Activated CD8-positive, alpha-beta T cell treated with anti-CD3 and anti-CD28 coated beads for 36 hours (primary cell): ENCODE measurements at regions of chr11 and their contacts with region 1.

Region 1: GRCh38 chr11:124070915-124071635 is 29.9 kb upstream of the OR10G7 start:
- DNase-seq: peak; percentile 72
- ATAC-seq: peak; percentile 64
- H3K4me3 Mint-ChIP-seq: peak overlapping the region; percentile 36
- H3K27ac Mint-ChIP-seq: peak overlapping the region; percentile 48
- H3K4me1 Mint-ChIP-seq: peaks cover 23% of the 10 kb centered on the region
- H3K27me3 Mint-ChIP-seq: peaks cover 24% of the 10 kb centered on the region
- CTCF ChIP-seq: peak; percentile 82

Region 2: DNA sequence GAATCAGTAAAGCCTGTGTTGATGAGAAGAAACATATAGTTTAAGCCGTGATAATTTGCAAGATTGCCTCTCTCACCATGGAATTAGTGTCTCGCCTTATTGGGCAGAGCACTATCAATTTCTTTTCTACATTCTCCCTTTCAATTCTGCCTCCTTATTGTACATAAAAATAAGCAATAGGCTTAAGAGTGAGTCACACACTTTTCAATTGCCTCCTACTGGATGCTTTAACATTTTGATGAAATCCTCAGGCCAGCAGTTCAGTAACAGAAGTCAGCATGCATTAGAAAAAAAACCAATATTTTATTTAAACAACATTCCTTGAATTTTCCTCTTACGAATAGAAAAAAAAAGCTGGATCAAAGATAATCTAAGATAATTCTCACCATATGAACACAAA is 10.4 kb after region 1 on chr11:
- CTCF ChIA-PET with region 1: interaction called, 13 read pairs
- POLR2A ChIA-PET with region 1: no interaction called
- intact Hi-C with region 1: no loop called
- DNase-seq: no peak
- ATAC-seq: no peak
- H3K4me3 Mint-ChIP-seq: no peak overlapping the region
- H3K27ac Mint-ChIP-seq: no peak overlapping the region
- H3K4me1 Mint-ChIP-seq: peaks cover 1% of the 10 kb centered on the region
- H3K27me3 Mint-ChIP-seq: peaks cover 28% of the 10 kb centered on the region
- CTCF ChIP-seq: no peak

Region 3: GRCh38 chr11:124123622-124124021 is 52.5 kb after region 1 on chr11:
- CTCF ChIA-PET with region 1: interaction called, 11 read pairs
- POLR2A ChIA-PET with region 1: no interaction called
- intact Hi-C with region 1: no loop called
- DNase-seq: no peak
- ATAC-seq: no peak
- H3K4me3 Mint-ChIP-seq: no peak overlapping the region
- H3K27ac Mint-ChIP-seq: no peak overlapping the region
- H3K4me1 Mint-ChIP-seq: no peaks in the 10 kb centered on the region
- H3K27me3 Mint-ChIP-seq: no peaks in the 10 kb centered on the region
- CTCF ChIP-seq: no peak

Region 4: DNA sequence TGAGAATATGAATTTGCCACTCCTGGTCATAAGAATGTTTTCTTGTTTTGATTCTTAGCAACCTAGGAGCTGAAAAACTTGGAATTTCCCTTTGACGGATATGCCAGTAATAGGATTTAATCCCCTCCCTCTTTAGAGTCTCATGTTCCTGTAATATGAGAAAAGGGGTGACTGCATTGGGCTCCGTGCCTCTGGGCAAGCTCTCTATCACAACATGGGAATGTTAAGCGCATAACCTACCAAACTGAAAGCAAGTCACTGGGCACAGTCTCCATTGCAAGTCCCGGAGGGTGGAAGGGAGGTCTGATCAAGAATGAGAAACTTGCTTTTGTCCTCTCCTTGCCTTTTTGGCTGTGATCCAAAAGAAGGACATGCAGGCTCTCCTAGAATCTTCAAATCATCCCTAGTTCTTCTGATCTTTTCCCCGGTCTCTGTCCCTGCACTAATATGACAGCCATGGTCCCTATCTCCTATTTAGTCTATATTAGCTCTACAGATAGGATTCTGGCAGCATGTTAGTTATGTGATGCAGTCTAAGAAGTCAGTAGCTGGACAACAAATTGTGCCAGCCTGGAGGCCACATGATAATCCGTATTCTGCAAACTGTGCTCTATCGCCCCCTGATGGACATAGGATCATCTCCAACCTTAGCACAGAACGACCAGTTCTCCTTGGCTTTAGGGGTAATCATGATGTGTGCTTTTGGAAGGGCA is 123.8 kb after region 1 on chr11:
- CTCF ChIA-PET with region 1: interaction called, 108 read pairs
- POLR2A ChIA-PET with region 1: no interaction called
- intact Hi-C with region 1: loop called (anchors 1 kb)
- DNase-seq: peak; percentile 70
- ATAC-seq: peak; percentile 87
- H3K4me3 Mint-ChIP-seq: no peak overlapping the region
- H3K27ac Mint-ChIP-seq: no peak overlapping the region
- H3K4me1 Mint-ChIP-seq: no peaks in the 10 kb centered on the region
- H3K27me3 Mint-ChIP-seq: peaks cover 6% of the 10 kb centered on the region
- CTCF ChIP-seq: peak; percentile 75

Region 5: DNA sequence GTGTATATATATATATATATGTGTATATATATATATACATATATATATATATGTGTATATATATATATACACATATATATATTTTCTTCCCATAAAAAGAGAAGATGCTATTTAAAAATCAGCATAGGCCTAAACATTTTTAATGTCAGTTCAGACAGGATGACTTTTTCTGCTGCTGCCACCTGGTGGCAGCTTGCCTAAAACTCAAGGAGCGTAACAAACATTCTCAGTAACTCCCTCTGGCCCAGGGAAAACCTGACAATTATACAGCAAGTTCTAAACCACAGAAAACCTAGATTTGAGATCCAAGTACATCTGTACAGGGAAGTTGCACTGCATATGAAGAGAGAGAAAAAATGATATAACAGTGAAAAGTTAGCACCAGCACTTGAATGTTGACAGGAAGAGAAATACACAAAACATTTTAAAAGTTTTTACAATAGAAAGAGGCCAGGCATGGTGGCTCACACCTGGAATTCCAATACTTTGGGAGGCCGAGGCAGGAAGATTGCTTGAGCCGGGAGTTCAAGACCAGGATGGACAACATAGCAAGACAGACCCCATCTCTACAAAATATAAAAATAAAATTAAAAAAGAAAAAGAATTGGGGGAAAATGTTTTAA is 515.3 kb after region 1 on chr11:
- CTCF ChIA-PET with region 1: interaction called, 4 read pairs
- POLR2A ChIA-PET with region 1: no interaction called
- intact Hi-C with region 1: loop called (anchors 5 kb)
- DNase-seq: peak; percentile 68
- ATAC-seq: no peak
- H3K4me3 Mint-ChIP-seq: no peak overlapping the region
- H3K27ac Mint-ChIP-seq: no peak overlapping the region
- H3K4me1 Mint-ChIP-seq: no peaks in the 10 kb centered on the region
- H3K27me3 Mint-ChIP-seq: peaks cover 14% of the 10 kb centered on the region
- CTCF ChIP-seq: peak; percentile 76